ENCODE measurements at regions of chr12 and their contacts with region 1.

Region 1: DNA sequence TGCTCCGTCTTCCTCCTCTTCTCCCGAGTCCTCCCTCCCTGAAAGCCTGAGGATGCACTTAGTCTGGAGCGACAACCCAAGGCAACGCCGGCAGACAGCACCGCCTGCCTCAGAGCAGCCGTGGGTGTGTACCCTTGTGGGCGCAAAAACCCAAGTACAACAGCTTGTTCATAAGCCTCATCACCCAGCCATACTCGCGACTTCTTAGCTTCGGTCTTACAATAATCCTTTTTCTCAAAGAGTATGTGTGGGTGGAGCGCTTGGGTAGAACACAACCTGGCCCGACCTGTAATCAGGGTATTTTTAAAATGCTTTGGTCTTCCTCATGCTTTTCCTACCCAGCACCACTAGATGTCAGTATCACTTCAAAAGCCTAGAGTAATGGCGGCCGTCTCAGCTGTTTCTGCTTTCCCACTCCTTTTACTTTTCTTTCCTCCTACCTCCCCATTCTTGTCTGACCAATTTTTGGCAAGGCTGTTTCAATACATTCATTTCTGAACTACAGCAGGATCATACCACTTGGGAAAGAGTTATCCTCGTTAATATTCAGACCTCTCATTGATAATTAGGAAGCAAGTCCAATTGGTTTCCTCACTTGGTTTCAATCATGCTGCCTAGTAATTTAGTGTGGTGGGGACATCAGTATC is 198.9 kb downstream of the EPS8 start:
- DNase-seq: no peak
- H3K4me3 ChIP-seq: peak overlapping the region; percentile 54
- CTCF ChIP-seq: peak; percentile 65

Region 2: DNA sequence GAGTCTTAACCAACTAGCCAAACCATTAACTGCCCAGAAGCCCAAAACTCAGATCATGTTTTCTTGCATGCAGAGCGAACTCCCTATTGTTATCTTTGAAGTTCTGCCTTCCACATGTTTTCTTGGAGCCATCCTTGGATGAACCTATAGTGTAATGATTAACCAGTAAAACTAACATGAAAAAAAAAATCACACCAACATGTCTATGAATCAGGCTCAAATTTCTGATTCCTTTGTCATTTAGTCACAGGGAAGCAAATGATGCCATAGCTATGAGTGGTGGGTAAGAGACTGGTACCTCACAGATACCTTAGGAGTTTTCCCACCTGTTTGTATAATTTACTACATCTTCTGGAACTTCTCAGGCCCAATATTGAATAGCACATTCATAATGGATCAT is 197.3 kb before region 1 on chr12:
- CTCF ChIA-PET with region 1: no interaction called
- POLR2A ChIA-PET with region 1: no interaction called
- DNase-seq: no peak
- H3K4me3 ChIP-seq: no peak overlapping the region
- CTCF ChIP-seq: no peak

Region 3: GRCh38 chr12:15532364-15532977 is 57.8 kb before region 1 on chr12:
- CTCF ChIA-PET with region 1: interaction called, 542 read pairs
- POLR2A ChIA-PET with region 1: no interaction called
- DNase-seq: no peak
- H3K4me3 ChIP-seq: no peak overlapping the region
- CTCF ChIP-seq: peak; percentile 45

Region 4: GRCh38 chr12:15575671-15576541 is 14.4 kb before region 1 on chr12:
- CTCF ChIA-PET with region 1: interaction called, 47 read pairs
- POLR2A ChIA-PET with region 1: no interaction called
- DNase-seq: no peak
- H3K4me3 ChIP-seq: no peak overlapping the region
- CTCF ChIP-seq: no peak

Region 5: DNA sequence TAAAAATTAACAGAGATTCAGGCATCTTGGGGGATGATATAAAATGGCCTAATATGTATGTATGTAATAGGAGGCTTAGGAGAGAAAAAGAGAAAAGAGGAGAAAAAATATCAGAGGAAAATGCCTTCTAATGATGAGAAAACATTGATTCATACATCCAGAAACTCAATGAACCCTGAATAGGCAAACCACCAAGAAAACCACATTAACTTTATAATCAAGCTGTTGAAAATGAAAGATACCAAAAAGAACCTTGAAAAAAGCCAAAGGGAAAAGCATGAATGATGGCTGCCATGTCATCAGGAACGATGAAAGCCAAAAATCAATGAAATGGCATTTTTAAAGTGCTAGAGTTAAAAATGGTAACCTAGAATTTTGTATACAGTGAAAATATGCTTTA is 18.6 kb after region 1 on chr12:
- CTCF ChIA-PET with region 1: interaction called, 12 read pairs
- POLR2A ChIA-PET with region 1: interaction called, 3 read pairs
- DNase-seq: no peak
- H3K4me3 ChIP-seq: no peak overlapping the region
- CTCF ChIP-seq: no peak

Region 6: GRCh38 chr12:15732341-15733061 is 142.2 kb after region 1 on chr12:
- CTCF ChIA-PET with region 1: no interaction called
- POLR2A ChIA-PET with region 1: no interaction called
- DNase-seq: no peak
- H3K4me3 ChIP-seq: no peak overlapping the region
- CTCF ChIP-seq: no peak

Region 7: DNA sequence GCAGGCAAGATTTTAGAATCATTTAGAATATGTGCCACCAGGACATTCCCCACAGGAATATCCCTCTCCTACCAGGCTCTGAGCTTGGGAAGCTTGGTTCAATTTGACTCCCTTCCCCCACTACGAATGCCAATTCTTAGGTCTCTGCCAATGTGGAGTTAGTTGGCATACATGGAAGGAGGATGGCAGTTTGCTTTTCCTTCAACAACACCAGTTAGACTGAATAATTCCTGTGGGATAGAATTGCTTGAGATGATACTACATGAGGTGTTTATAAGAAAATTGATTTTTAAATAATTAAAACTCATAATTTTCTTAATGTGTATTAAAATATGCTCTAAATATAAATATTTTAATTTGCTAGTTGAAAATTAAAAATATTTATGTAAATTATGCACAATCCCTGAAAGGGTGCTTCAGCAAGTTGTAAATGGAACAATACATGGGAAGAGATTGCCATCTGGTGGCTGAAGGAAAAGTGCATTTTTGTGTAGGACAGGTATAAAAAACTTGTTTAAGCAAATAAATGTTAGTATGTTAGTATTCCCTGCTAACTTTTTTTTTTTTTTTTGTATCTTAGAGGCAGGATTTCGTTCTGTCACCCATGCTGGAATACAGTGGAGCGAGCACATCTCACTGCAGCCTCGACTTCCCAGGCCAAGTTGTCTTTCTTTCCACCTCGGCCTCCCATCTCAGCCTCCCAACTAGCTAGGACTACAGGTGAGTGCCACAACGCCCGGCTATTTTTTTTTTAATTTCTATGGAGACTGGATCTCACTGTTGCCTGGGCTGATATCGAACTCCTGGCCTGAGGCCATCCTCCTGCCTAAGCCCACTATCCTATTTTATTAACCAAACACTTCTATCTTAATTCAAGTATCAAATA is 266.0 kb after region 1 on chr12:
- CTCF ChIA-PET with region 1: interaction called, 393 read pairs
- POLR2A ChIA-PET with region 1: no interaction called
- DNase-seq: no peak
- H3K4me3 ChIP-seq: no peak overlapping the region
- CTCF ChIP-seq: peak; percentile 49

Region 8: DNA sequence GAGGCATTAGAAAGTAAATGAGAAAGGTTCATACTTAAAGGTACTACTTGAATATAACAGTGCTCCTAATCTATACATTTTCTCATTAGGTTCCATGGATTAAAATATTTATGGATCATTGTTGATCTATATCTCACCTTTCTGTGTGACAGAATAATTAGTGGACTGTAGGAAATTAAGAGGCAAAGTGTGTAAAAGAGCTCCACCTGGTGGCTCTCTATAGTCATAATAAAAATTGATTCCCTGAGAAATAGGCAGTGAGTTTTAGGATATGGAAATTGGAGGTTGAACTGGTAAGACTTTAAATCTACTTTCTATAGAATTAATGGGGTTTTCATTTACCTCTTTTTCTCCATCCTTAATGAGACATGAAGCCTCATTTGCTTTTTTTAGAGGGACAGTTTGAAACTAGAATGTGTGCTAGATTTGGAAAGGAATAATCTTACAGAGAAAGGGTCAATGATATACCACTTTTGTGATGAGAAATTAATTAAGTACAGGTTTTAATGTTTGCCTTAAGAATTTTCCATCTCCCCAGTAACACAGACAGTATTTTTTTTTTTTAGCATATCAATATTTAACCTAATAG is 309.1 kb after region 1 on chr12:
- CTCF ChIA-PET with region 1: interaction called, 15 read pairs
- POLR2A ChIA-PET with region 1: no interaction called
- DNase-seq: no peak
- H3K4me3 ChIP-seq: no peak overlapping the region
- CTCF ChIP-seq: peak; percentile 33

Measured in AG04449 (cell line).